Psoas muscle (tissue), 8 donors: ENCODE measurements at regions of chr15 and their contacts with region 1.

Region 1: DNA sequence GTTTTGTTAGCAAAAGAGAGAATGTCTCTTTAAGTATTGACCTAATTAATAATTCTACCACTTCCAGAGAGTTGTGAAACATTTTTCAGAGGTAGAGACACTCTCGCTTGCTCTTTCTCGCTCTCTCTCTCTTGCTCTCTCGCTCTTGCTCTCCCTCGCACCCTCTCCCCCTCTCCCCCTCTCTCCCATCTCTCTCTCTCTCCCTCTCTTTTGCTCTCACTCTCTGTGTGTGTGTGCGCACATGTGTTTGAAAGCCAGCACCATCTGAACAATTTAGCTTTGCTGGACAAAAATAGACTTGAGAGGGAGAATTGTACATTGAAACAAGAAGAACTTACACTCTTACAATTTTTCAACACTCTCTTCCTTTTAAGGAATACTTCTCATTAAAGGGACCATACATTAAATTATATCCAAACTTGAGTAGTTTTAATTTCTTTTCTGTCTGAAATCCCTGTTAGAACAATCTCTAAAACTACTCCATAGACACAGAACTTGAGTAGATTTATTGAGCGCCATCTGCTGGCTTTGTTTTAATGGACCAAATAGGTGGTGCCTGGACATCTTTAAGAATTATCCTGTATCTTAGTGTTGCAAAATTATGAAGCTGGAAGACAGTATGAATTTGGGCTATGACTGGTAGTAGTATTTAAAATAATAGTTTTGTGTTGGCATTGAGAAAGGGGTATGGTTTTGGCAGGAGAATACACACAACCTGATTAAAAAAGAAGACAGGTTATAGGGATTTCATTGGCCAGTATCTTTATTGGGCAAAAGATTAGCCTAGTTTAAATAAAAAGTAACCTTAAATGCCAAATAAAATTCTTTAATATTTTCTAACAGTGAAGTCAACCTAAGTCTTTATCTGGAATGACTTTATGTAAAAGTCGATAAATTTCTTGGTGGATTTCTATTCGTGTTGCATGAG is 124.6 kb downstream of the AKAP13 start:
- DNase-seq: no peak
- ATAC-seq: peak; percentile 43 to 82 (median 56)
- H3K4me3 ChIP-seq: no peak overlapping the region
- H3K27ac ChIP-seq: no peak overlapping the region
- H3K4me1 ChIP-seq: peaks cover 17% of the 10 kb centered on the region
- H3K27me3 ChIP-seq: no peaks in the 10 kb centered on the region
- CTCF ChIP-seq: peak; percentile 72

Region 2: GRCh38 chr15:85296615-85297402 is 208.2 kb before region 1 on chr15:
- intact Hi-C with region 1: loop called in 1 of 2 experiments (anchors 5 kb)
- DNase-seq: peak in 1 of 2 donors; percentile 59
- ATAC-seq: peak; percentile 91 to 98 (median 95)
- H3K4me3 ChIP-seq: peak overlapping the region; percentile 57
- H3K27ac ChIP-seq: no peak overlapping the region
- H3K4me1 ChIP-seq: no peaks in the 10 kb centered on the region
- H3K27me3 ChIP-seq: no peaks in the 10 kb centered on the region
- CTCF ChIP-seq: peak; percentile 80

Region 3: GRCh38 chr15:85330901-85331588 is 174.0 kb before region 1 on chr15:
- intact Hi-C with region 1: loop called in 1 of 2 experiments (anchors 2 kb)
- DNase-seq: peak; percentile 86 to 93
- ATAC-seq: peak; percentile 93 to 98 (median 97)
- H3K4me3 ChIP-seq: no peak overlapping the region
- H3K27ac ChIP-seq: peak overlapping the region; percentile 58
- H3K4me1 ChIP-seq: peaks cover 12% of the 10 kb centered on the region
- H3K27me3 ChIP-seq: no peaks in the 10 kb centered on the region
- CTCF ChIP-seq: peak; percentile 83